Colonic mucosa (tissue), 4 donors: ENCODE measurements at regions of chr21 and their contacts with region 1.

Region 1: DNA sequence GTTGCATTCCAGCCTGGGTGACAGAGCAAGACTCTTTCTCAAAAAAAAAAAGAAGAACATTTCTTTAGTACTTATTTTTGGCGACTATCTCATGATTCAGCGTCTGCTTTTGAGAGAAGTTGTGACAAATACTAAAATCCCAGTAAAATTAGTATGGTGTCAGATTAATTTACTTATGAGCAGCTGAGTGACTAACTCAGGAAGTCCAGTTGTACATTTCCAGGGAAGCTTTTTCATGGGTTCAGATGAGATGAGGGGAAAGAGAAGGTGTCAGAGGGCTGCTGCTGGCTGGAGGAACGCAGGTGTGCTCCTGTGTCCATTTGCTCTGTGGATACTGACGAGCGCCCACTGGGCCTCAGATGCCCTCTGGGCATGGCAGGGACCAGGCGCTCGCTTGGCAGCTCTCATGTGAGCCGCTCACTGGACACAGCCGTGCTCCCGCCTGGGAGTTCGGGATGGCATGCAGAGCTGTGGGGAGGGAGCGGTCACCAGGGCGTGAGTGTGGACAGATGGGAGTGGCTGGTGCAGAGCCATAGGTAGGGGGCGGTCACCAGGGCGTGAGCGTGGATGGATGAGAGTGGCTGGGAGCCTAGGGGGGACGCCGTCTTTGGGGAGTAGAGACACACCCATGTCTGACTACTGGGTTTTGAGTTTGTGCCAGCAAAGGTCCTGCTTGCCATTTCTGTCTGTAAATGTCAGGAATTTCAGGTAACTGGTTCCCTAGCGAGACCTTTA is 55.0 kb downstream of the ADARB1 start:
- DNase-seq: no peak
- H3K4me3 ChIP-seq: no peak overlapping the region
- H3K27ac ChIP-seq: peak overlapping the region; percentile 41
- H3K4me1 ChIP-seq: peaks cover 5% of the 10 kb centered on the region
- H3K27me3 ChIP-seq: no peaks in the 10 kb centered on the region
- CTCF ChIP-seq: no peak

Region 2: DNA sequence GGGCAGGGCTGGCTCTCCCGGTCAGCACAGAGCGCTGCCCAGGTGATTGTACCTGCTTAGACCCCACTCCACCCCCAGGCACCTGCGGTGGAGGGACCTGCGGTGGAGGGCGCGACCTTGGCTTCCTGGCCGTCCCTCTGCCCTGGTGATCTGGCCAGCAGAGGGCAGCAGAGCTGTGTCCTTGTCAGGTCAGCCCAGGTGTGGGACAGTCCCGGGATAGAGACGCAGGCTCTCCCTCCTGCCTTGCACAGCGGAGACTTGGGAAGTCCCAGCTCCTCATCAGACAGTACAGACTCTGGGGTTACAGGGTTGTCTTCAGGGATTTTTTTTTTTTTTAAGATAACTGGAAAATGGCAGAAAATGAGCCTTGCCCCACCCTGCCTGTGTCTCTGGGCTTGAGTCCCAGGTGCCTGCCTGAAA is 179.6 kb before region 1 on chr21:
- intact Hi-C with region 1: loop called (anchors 1 kb)
- DNase-seq: peak; percentile 91
- H3K4me3 ChIP-seq: no peak overlapping the region
- H3K27ac ChIP-seq: no peak overlapping the region
- H3K4me1 ChIP-seq: peaks cover 6% of the 10 kb centered on the region
- H3K27me3 ChIP-seq: no peaks in the 10 kb centered on the region
- CTCF ChIP-seq: peak; percentile 88

Region 3: DNA sequence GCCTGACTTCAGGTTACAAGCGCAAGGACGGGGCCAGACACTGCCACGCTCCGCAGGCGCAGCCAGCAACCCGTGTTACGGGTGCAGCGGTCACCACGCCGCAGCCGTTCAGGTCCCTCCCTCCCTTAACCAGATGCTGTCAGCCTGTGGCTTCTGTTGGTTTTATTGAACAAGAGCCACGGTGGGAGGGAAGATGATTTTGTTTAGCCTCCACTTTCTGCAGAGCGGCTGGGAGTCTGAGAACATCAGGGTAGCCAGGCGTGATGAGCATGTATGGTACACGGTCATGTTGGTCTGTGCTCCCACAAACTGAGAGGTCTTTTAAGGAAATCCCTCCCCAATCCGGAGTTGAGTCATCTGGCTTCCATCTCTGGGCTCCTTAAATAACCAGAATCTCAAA is 73.5 kb before region 1 on chr21:
- intact Hi-C with region 1: no loop called
- DNase-seq: no peak
- H3K4me3 ChIP-seq: no peak overlapping the region
- H3K27ac ChIP-seq: no peak overlapping the region
- H3K4me1 ChIP-seq: no peaks in the 10 kb centered on the region
- H3K27me3 ChIP-seq: no peaks in the 10 kb centered on the region
- CTCF ChIP-seq: no peak

Region 4: DNA sequence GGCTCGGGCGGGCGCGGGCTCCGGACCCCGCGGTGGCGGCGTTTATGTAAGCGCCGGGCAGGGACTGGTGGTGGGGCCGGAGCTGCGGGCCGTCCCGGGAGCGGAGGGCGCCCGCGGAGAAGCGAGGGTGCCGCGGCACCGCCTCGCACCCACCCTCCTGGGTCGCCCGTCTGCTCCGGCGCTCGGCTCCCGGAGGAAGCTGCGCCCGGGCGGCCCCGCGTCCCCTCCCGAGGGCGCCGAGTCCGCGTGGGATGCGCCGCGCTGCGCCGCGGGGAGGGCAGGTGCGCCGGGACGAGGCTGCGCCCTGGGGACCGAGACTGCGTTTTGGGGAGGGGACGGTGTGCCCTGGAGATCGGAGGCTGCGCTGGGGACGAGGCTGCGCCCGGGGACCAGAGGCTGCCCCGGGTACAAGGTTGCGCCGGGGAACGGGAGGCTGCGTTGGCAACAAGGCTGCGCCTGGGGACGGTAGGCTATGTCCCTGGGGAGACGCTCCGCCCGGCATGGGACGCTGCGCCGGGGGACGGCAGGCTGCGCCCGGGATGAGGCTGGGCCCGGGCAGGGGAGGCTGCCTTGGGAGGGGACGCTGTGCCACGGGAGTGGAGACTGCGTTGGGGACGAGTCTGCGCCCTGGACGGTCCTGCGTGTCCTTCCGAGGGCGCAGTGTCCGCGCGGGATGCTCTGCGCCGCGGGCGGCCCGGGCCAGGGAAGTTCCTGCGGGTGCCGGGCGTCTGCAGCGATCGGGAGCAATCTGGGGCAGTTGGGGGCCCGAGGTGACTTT is 54.3 kb before region 1 on chr21:
- intact Hi-C with region 1: loop called (anchors 5 kb)
- DNase-seq: no peak
- H3K4me3 ChIP-seq: peak overlapping the region; percentile 77
- H3K27ac ChIP-seq: no peak overlapping the region
- H3K4me1 ChIP-seq: peaks cover 8% of the 10 kb centered on the region
- H3K27me3 ChIP-seq: no peaks in the 10 kb centered on the region
- CTCF ChIP-seq: no peak